Activated naive CD8-positive, alpha-beta T cell treated with anti-CD3 and anti-CD28 coated beads, Interleukin-2, amount 10 ng/mL, durations not matched to agents 7 days and 5 days (primary cell): ENCODE measurements at regions of chr17 and their contacts with region 1.

Region 1: DNA sequence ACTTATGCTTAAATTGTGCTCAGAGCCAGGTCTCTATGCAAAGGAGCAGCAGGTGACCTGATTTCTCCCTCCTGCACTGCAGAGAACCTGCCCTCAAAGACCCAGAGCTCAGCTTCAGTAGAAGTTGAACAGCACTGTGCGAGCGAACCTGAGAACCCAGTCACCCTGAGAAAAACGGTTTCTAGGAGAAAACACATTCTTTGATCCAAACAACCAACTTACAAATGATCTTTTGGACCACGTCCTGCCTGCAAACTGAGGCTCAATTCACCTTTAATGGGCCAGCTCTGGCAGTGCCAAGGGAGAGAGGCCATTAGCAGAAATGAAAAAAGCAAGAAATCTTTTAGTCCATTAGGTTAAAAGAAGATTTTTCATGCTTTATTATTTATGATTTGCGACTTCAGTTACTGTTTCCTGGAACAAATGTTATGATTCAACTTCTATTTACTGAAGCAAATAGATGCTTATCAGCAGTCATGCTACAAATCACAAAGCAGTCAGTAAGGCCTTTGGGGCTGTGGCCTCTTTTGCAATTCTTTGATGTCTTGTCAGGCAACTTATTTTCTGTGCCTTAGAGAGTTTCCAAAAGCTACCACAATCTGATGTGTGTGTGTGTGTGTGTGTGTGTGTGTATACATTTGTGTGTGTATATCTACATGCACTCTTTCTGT is 65.7 kb upstream of the LRRC37A3 start:
- DNase-seq: peak; percentile 37
- ATAC-seq: peak; percentile 48
- H3K4me3 Mint-ChIP-seq: peak overlapping the region; percentile 86
- H3K27ac Mint-ChIP-seq: peak overlapping the region; percentile 97
- H3K4me1 Mint-ChIP-seq: peaks cover 25% of the 10 kb centered on the region
- H3K27me3 Mint-ChIP-seq: no peaks in the 10 kb centered on the region

Region 2: DNA sequence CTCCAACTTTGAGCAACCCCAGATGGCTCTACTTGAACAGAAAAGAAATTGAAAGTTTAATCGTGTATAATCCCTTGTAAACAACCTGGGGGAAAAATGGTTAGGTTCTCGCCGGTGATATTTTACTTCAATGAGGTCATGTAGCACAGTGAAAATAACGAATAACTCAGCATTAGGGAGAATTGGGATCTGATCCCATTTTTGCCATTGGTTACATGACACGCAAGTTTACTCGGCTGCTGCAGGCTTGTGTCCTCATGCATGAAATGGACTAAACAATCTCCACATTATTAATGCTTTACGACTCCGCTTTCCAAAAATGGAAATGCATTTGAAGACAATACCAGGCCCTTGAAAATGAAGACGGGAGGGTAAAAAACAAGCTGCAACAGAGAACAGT is 20.2 kb before region 1 on chr17:
- POLR2A ChIA-PET with region 1: interaction called, 18 read pairs
- DNase-seq: no peak
- ATAC-seq: no peak
- H3K4me3 Mint-ChIP-seq: peak overlapping the region; percentile 35
- H3K27ac Mint-ChIP-seq: no peak overlapping the region
- H3K4me1 Mint-ChIP-seq: peaks cover 41% of the 10 kb centered on the region
- H3K27me3 Mint-ChIP-seq: no peaks in the 10 kb centered on the region

Region 3: DNA sequence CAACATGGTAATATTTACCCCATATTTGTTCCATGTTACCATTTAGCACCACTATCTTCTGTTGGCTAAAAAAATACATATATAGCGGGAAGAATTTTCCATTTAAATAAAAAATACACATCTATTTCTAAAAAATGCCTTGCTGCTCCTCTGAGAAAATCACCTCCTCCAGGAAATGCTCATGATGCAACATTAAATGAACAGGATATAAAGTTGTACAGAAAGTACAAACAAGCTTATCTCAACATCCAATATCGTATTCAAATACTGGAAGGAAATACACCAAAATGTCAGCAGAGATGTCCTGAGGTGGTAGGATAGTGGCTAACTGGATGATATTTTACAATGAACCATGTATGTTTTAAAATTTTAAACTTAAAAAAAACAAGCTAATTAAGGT is 50.2 kb after region 1 on chr17:
- POLR2A ChIA-PET with region 1: interaction called, 10 read pairs
- DNase-seq: no peak
- ATAC-seq: no peak
- H3K4me3 Mint-ChIP-seq: peak overlapping the region; percentile 42
- H3K27ac Mint-ChIP-seq: peak overlapping the region; percentile 61
- H3K4me1 Mint-ChIP-seq: peaks cover 48% of the 10 kb centered on the region
- H3K27me3 Mint-ChIP-seq: no peaks in the 10 kb centered on the region

Region 4: DNA sequence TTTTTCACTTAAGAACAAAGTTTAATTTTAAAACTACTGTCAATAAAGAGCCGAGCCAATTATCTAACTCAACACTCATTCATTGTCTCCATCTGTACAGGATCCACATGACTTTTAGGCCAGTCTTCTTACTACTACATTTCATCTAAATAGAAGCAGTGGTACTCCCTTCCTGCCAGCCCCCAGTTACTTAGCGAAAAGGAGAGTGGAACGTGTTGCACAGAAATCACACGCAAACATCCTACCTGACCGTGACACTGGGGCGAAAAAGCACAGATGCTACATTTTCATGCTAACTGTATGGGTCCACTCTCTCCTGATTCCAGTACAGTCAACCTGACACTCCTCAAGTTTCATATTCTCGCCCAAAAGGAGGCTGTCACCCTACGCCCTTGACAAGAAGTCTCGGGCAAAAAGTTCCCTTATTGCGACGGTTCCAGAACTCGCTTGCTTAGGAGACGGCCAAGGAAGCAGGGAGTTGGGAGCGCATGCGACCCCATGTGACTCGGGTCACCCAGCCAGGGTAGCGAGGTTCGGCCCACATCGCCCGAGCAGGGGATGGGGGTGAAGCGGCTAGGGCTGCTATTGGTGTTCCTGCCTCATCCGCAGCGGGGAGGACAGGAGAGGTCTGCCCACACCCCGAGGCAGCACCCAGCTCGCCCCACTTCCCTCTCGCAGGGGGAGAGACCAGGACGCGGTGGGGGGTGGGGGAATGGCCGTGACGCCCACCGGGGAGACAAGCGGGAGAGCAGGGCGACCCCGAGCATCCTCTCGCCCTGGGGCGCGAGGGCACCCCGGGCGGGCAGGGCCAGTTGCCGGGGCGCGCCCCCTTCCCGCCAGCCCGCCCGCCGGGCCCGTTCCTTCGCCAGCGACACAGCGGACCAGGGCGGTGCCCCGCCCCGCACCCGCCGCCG is 70.6 kb after region 1 on chr17:
- POLR2A ChIA-PET with region 1: interaction called, 18 read pairs
- DNase-seq: peak; percentile 67
- ATAC-seq: peak; percentile 41
- H3K4me3 Mint-ChIP-seq: peak overlapping the region; percentile 94
- H3K27ac Mint-ChIP-seq: peak overlapping the region; percentile 85
- H3K4me1 Mint-ChIP-seq: peaks cover 35% of the 10 kb centered on the region
- H3K27me3 Mint-ChIP-seq: peaks cover 10% of the 10 kb centered on the region